ENCODE measurements at regions of chr4 and their contacts with region 1.

Region 1: GRCh38 chr4:54440394-54441136 is 211.5 kb downstream of the PDGFRA start:
- DNase-seq: no peak
- H3K4me3 ChIP-seq: peak overlapping the region in 3 of 8 donors; percentile 5 to 35 (median 23)
- H3K27ac ChIP-seq: peak overlapping the region in 7 of 8 donors; percentile 33 to 71 (median 66)
- H3K4me1 ChIP-seq: peaks cover 0 to 14% (median 6%) of the 10 kb centered on the region in 6 donors
- H3K27me3 ChIP-seq: no peaks in the 10 kb centered on the region
- CTCF ChIP-seq: peak in 10 of 11 experiments; percentile 13 to 62 (median 52)
- POLR2A ChIP-seq: no peak

Region 2: GRCh38 chr4:54322818-54323417 is 117.6 kb before region 1 on chr4:
- intact Hi-C with region 1: loop called (anchors 5 kb)
- DNase-seq: no peak
- H3K4me3 ChIP-seq: no peak overlapping the region
- H3K27ac ChIP-seq: no peak overlapping the region
- H3K4me1 ChIP-seq: peaks cover 0 to 7% (median 1%) of the 10 kb centered on the region in 6 donors
- H3K27me3 ChIP-seq: no peaks in the 10 kb centered on the region
- CTCF ChIP-seq: peak in 8 of 11 experiments; percentile 43 to 75 (median 62)
- POLR2A ChIP-seq: no peak

Region 3: DNA sequence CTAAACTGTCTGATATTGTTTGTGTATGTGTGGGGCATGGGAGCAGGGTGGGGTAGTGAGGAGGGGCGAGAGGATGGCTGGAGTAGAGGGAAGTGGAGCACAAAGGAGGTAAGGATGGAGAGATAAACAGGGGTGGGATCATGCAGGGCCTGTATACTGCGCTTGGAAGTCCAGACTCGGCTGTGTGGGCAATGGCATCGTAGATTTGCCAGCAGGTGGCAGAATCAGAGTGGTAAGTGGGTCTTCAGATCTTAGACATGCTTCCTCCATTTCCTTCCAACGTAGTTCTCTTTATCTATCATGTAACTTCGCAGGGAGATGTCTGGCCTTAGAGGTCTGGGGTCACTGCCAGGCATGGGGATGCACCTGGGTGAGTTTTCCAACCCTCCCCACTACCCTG is 56.0 kb before region 1 on chr4:
- intact Hi-C with region 1: loop called (anchors 10 kb)
- DNase-seq: no peak
- H3K4me3 ChIP-seq: no peak overlapping the region
- H3K27ac ChIP-seq: no peak overlapping the region
- H3K4me1 ChIP-seq: no peaks in the 10 kb centered on the region
- H3K27me3 ChIP-seq: no peaks in the 10 kb centered on the region
- CTCF ChIP-seq: peak in 10 of 11 experiments; percentile 15 to 59 (median 45)
- POLR2A ChIP-seq: no peak